Cardiac septum (tissue), 1 donor: ENCODE measurements at regions of chr2 and their contacts with region 1.

Region 1: GRCh38 chr2:206159346-206160124 is at the starts of genes EEF1B2 and NDUFS1:
- DNase-seq: peak; percentile 99
- total RNA-seq, gene EEF1B2: 223 TPM
- total RNA-seq, gene NDUFS1: 388 TPM

Region 2: DNA sequence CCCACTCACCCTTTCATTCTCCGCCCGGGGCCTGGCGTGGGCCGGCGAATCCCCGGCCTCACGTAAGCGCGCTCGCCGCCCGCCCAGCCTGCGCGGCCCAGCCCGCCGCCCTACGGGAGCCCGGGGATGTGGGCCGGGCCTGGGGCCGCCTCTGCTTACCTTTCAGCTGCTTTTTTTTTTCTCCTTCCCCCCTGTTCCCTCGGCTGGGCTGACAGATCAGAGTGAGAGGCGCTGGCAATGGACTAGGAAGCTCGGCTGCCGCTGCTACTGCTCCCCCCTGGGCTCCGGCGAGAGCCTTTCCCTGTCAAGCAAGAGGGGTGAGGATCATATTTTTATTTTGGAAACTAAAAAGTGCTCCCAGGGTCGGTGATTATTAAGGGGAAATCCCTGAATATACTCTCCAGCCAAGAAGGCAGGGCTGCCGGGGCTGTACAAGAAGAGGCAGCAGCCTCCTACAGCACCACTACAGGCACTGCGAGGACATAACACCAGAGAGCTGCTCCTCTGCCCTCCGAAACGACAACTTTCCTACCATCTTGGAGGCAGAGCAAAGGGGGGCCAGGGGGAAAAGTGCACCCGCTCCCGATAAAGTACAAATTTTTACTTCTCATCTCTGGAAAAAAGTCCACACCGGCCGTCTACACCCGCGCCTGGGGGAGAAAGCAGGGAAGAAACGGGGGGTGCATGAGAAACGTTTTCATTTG is 73.6 kb before region 1 on chr2 and contains the start of gene INO80D:
- intact Hi-C with region 1: loop called (anchors 1 kb)
- DNase-seq: peak; percentile 87
- total RNA-seq, gene INO80D: 20.8 TPM

Region 3: DNA sequence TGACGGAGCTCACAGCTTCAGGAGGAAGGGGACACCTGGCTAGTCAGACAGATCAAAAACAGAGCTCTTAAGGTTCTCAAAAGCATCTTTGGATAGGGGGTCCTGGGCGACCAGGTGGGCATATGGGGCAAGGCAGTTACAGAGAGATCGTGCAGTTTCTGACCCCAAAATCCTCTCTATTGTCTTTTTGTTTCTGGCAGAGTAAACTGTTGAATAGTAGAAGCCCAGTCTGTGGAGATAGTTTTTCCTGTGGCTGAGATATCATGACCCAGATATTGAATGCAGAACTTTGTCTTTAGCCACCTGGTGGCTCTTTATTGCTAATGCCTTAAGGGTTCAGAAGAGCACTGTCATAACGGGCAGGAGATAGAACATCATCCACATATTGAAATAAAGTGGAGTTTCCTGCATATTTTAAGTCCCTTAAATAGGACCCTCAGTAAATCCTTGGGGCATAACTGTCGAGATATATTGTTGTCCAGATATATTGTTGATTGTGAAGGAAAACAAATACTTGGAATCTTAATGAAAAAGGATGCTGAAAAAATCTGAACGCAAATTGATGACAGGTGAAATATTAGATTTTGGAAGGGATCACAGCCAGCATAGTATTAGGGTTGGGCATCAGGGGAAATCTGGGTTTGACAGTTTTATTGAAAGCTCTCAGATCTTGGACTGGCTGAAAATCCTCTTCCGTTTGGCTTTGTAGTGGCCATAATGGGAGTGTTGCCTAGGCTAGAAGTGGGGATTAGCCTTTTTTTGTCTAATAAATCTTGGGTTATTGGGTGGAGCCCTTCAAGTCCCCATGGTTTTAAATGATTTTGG is 100.9 kb after region 1 on chr2:
- intact Hi-C with region 1: loop called (anchors 10 kb)
- DNase-seq: no peak